ENCODE measurements at regions of chr5 and their contacts with region 1.

Region 1: GRCh38 chr5:178232124-178232919 is at the start of gene PHYKPL:
- DNase-seq: peak; percentile 84
- H3K4me3 ChIP-seq: peak within 1 kb of the TSS; percentile 98
- H3K27ac ChIP-seq: peak within 1 kb of the TSS; percentile 71
- H3K4me1 ChIP-seq: peaks cover 30% of the 10 kb centered on the region
- CTCF ChIP-seq: 0 out of 2 replicates have a peak, but pooled peaks have one; percentile 17
- total RNA-seq, gene PHYKPL: 69.7 and 86.3 TPM in 2 replicates

Region 2: GRCh38 chr5:178204182-178204894 is 28.0 kb before region 1 on chr5 and contains the start of gene HNRNPAB:
- CTCF ChIA-PET with region 1: no interaction called
- POLR2A ChIA-PET with region 1: interaction called, 4 read pairs
- intact Hi-C with region 1: loop called (anchors 2 kb)
- DNase-seq: peak; percentile 97
- H3K4me3 ChIP-seq: peak within 1 kb of the TSS; percentile 99
- H3K27ac ChIP-seq: peak within 1 kb of the TSS; percentile 82
- H3K4me1 ChIP-seq: peaks cover 20% of the 10 kb centered on the region
- CTCF ChIP-seq: no peak
- total RNA-seq, gene HNRNPAB: 146 and 184 TPM in 2 replicates

Region 3: DNA sequence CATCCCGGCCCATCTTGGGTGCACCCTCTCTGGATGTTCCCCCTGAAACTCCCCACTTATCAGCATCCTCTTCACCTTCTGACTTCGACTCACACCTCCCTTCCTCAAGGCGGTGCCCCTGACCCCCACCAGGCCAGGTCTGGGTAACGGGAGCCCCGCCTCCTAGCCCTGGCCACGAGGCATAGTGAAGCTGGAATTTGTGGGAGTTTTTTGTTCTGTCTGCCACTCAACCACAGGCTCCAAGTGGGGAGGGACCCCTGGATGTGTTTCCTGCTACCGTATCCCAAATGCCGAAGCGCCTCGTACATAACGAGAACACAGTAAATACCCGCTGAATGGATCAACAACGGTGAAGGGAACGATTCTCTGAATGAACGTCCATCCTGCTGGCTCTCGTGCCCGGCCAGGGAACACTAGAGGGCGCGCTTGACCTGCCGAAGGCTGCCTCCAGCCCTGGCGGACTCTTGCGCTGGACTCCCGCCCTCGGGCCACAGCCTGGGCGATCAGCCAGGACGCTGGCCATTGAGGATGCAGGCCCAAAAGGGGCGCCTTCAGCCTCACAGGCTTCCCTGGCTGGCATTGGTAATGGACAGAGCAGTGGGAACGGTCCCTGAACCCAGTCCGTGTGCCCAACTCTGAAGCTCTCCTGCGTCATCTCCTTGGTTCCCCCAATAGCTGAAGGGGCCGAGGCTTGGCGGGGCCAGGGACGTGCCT is 47.6 kb after region 1 on chr5:
- CTCF ChIA-PET with region 1: no interaction called
- POLR2A ChIA-PET with region 1: no interaction called
- intact Hi-C with region 1: loop called (anchors 1 kb)
- DNase-seq: peak; percentile 53
- H3K4me3 ChIP-seq: no peak overlapping the region
- H3K27ac ChIP-seq: no peak overlapping the region
- H3K4me1 ChIP-seq: no peaks in the 10 kb centered on the region
- CTCF ChIP-seq: peak; percentile 89

Region 4: GRCh38 chr5:178396796-178397720 is 164.7 kb after region 1 on chr5:
- CTCF ChIA-PET with region 1: no interaction called
- POLR2A ChIA-PET with region 1: no interaction called
- intact Hi-C with region 1: no loop called
- DNase-seq: no peak
- H3K4me3 ChIP-seq: no peak overlapping the region
- H3K27ac ChIP-seq: no peak overlapping the region
- H3K4me1 ChIP-seq: no peaks in the 10 kb centered on the region
- CTCF ChIP-seq: no peak

Region 5: GRCh38 chr5:178453224-178453623 is 220.9 kb after region 1 on chr5:
- CTCF ChIA-PET with region 1: no interaction called
- POLR2A ChIA-PET with region 1: no interaction called
- intact Hi-C with region 1: no loop called
- DNase-seq: no peak
- H3K4me3 ChIP-seq: no peak overlapping the region
- H3K27ac ChIP-seq: no peak overlapping the region
- H3K4me1 ChIP-seq: no peaks in the 10 kb centered on the region
- CTCF ChIP-seq: no peak

Region 6: DNA sequence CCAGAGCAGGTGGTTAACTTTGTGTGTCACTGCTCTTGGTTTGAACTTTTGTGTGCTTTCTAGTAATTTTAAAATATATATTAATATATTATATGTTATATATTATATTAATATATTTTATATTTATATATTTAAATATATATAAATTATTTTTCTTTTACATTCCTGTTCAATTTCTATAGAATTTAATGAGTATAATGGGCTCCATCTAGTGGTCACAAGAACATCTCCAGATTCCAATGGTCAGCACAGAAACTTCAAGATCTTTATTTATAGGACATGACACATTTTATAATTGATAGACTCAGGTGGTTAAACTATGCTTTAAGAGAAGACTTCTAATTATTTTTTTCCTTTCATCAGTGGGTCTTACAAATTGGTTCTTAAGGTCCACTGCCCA is 318.7 kb after region 1 on chr5:
- CTCF ChIA-PET with region 1: no interaction called
- POLR2A ChIA-PET with region 1: no interaction called
- intact Hi-C with region 1: loop called (anchors 1 kb)
- DNase-seq: peak; percentile 47
- H3K4me3 ChIP-seq: no peak overlapping the region
- H3K27ac ChIP-seq: no peak overlapping the region
- H3K4me1 ChIP-seq: no peaks in the 10 kb centered on the region
- CTCF ChIP-seq: peak; percentile 74

Region 7: GRCh38 chr5:178626484-178627258 is 394.3 kb after region 1 on chr5 and contains the start of gene CLK4:
- CTCF ChIA-PET with region 1: no interaction called
- POLR2A ChIA-PET with region 1: no interaction called
- intact Hi-C with region 1: loop called (anchors 10 kb)
- DNase-seq: peak; percentile 97
- H3K4me3 ChIP-seq: peak within 1 kb of the TSS; percentile 94
- H3K27ac ChIP-seq: peak within 1 kb of the TSS; percentile 77
- H3K4me1 ChIP-seq: peaks cover 28% of the 10 kb centered on the region
- CTCF ChIP-seq: no peak
- total RNA-seq, gene CLK4: 31.8 and 37.4 TPM in 2 replicates